Activated B cell treated with CpG ODN at 0.5 μM for 24 hours (primary cell): ENCODE measurements at regions of chr4 and their contacts with region 1.

Region 1: DNA sequence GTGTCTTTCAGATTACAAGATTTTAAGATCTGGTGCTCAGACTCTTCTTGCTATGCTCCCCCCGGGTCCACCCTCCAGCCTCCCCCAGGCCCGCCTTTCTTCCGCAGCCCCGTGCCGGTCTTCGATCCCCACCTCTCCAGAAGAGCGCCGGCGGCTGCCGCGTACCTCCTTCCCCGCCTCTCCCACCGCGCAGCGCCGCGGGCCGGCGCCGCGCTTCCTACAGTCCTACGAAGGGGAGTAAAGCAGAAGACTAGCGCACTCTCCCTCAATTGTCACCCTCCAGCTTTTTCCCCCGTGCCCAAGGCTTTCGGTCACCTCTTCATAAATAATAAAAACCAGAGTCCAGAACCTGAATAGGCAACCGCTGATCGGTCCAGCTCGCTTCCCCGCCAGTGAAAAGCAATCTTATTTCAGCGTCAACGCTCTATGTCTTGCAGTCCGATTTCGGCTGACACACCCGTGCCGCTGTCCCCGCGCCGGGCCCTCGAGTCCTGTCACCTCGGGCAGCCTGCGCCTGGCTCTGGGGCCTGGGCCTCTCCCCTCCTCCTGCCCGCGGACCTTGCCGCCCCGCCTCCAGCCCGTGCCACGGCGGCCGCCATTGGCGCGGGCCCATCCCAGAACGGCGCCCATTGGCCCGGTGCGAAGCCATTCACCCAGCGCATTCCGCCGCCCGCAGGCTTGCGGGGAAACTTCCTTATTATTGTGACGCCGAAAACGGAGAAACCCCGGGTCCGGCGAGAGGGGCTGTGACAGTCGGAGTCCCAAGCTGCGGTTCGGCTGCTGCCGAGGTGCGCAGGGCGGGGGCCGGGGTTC is at the start of gene HERC3:
- DNase-seq: peak; percentile 87
- ATAC-seq: peak; percentile 93
- H3K4me3 Mint-ChIP-seq: peak within 1 kb of the TSS; percentile 94
- H3K27ac Mint-ChIP-seq: peak within 1 kb of the TSS; percentile 84
- H3K4me1 Mint-ChIP-seq: peaks cover 32% of the 10 kb centered on the region
- H3K27me3 Mint-ChIP-seq: no peaks in the 10 kb centered on the region
- CTCF ChIP-seq: no peak
- total RNA-seq, gene HERC3: 23.8 and 27.5 TPM in 2 replicates

Region 2: DNA sequence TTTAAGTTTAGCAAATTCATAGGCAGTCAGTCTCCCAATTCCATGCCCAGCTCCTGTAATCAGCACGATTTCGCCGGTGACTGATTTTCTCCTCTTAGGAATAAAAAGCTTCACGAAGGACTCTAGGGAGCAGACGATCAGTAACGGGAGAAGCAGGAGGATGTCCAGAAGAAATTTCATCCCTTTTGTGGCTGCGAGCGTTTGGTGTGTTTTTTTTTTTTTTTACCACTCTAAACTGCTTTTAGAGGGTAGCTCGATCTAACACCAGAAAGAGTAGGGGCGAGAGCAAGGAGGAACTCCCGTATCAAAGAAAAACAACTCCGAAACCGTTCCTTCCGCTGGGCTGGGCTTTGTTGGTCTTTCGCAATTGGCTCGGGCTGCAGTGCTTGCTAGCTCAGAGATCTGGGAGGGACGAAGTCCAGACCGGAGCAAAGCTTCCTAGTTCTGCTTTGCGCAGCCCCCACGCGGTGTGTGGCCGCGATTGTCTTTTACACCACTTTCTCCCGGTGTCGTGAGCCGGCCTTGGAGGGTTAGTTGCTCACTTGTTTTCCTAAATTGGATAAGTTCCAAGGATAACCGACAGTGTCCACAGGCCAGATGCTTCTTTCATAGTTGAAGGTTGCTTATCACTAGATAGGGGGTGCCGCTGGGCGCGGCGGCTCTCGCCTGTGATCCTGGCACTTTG is 1201.0 kb before region 1 on chr4 and contains the start of gene HSD17B11:
- CTCF ChIA-PET with region 1: no interaction called
- POLR2A ChIA-PET with region 1: no interaction called
- intact Hi-C with region 1: loop called (anchors 10 kb)
- DNase-seq: peak; percentile 70
- ATAC-seq: peak; percentile 99
- H3K4me3 Mint-ChIP-seq: peak within 1 kb of the TSS; percentile 97
- H3K27ac Mint-ChIP-seq: peak within 1 kb of the TSS; percentile 96
- H3K4me1 Mint-ChIP-seq: peaks cover 48% of the 10 kb centered on the region
- H3K27me3 Mint-ChIP-seq: no peaks in the 10 kb centered on the region
- CTCF ChIP-seq: no peak
- total RNA-seq, gene HSD17B11: 26.2 and 28.4 TPM in 2 replicates

Region 3: GRCh38 chr4:88284439-88285234 is 307.4 kb before region 1 on chr4 and contains the start of gene PPM1K:
- CTCF ChIA-PET with region 1: no interaction called
- POLR2A ChIA-PET with region 1: interaction called, 13 read pairs
- intact Hi-C with region 1: loop called (anchors 1 kb)
- DNase-seq: peak; percentile 99
- ATAC-seq: peak; percentile 81
- H3K4me3 Mint-ChIP-seq: peak within 1 kb of the TSS; percentile 98
- H3K27ac Mint-ChIP-seq: peak within 1 kb of the TSS; percentile 99
- H3K4me1 Mint-ChIP-seq: peaks cover 54% of the 10 kb centered on the region
- H3K27me3 Mint-ChIP-seq: no peaks in the 10 kb centered on the region
- CTCF ChIP-seq: no peak
- total RNA-seq, gene PPM1K: 72.1 and 76.6 TPM in 2 replicates

Region 4: DNA sequence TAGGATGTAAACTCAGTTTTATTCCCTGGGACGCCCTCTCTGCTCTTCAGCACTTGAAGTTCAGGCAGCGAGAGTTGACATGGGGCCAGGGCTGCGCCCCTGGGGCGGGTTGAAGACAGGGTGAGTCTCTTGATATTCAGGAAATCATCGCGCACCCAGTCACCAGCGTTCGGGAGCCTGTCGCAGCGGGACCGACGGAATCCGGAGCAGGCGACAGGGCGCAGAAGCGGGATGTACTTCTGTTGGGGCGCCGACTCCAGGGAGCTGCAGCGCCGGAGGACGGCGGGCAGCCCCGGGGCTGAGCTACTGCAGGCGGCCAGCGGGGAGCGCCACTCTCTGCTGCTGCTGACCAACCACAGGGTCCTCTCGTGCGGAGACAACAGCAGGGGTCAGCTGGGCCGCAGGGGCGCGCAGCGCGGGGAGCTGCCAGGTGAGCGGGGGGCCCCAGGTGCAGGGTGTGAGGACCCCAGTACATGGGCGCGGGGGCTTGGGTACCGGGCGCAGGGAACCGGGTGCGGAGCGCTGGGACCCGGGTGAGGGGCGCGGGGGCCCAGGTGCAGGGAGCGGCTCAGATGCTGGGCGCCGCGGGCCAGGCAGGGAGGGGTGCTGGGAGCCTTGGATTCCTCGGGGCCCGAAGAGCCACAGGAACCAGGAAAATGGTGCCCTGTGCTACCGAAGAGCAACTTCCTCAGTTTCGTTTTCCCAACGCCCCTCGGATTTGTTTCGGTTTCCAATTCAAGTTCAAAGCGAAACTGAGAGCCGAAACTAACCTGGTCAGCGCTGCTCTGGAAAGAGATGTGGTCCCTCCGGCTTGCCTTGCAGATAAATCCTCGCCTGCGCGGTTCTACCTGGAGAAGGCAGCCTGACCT is 213.1 kb before region 1 on chr4 and contains the start of gene HERC6:
- CTCF ChIA-PET with region 1: no interaction called
- POLR2A ChIA-PET with region 1: interaction called, 5 read pairs
- intact Hi-C with region 1: loop called (anchors 2 kb)
- DNase-seq: peak; percentile 64
- ATAC-seq: peak; percentile 80
- H3K4me3 Mint-ChIP-seq: peak within 1 kb of the TSS; percentile 92
- H3K27ac Mint-ChIP-seq: peak within 1 kb of the TSS; percentile 91
- H3K4me1 Mint-ChIP-seq: peaks cover 31% of the 10 kb centered on the region
- H3K27me3 Mint-ChIP-seq: no peaks in the 10 kb centered on the region
- CTCF ChIP-seq: no peak
- total RNA-seq, gene HERC6: 11.4 and 12.2 TPM in 2 replicates

Region 5: GRCh38 chr4:88523325-88524129 is 68.5 kb before region 1 on chr4 and contains the start of gene PYURF:
- CTCF ChIA-PET with region 1: no interaction called
- POLR2A ChIA-PET with region 1: interaction called, 7 read pairs
- intact Hi-C with region 1: loop called (anchors 2 kb)
- DNase-seq: peak; percentile 72
- ATAC-seq: peak; percentile 84
- H3K4me3 Mint-ChIP-seq: peak within 1 kb of the TSS; percentile 95
- H3K27ac Mint-ChIP-seq: peak within 1 kb of the TSS; percentile 85
- H3K4me1 Mint-ChIP-seq: peaks cover 18% of the 10 kb centered on the region
- H3K27me3 Mint-ChIP-seq: no peaks in the 10 kb centered on the region
- CTCF ChIP-seq: no peak
- total RNA-seq, gene PYURF: 42.2 and 48.3 TPM in 2 replicates

Region 6: GRCh38 chr4:88697588-88698329 is 105.8 kb after region 1 on chr4 and contains the start of gene NAP1L5:
- CTCF ChIA-PET with region 1: no interaction called
- POLR2A ChIA-PET with region 1: interaction called, 6 read pairs
- intact Hi-C with region 1: loop called (anchors 1 kb)
- DNase-seq: peak; percentile 55
- ATAC-seq: peak; percentile 84
- H3K4me3 Mint-ChIP-seq: peak within 1 kb of the TSS; percentile 89
- H3K27ac Mint-ChIP-seq: peak within 1 kb of the TSS; percentile 78
- H3K4me1 Mint-ChIP-seq: peaks cover 9% of the 10 kb centered on the region
- H3K27me3 Mint-ChIP-seq: no peaks in the 10 kb centered on the region
- CTCF ChIP-seq: no peak
- total RNA-seq, gene NAP1L5: 1.8 and 2.6 TPM in 2 replicates

Region 7: DNA sequence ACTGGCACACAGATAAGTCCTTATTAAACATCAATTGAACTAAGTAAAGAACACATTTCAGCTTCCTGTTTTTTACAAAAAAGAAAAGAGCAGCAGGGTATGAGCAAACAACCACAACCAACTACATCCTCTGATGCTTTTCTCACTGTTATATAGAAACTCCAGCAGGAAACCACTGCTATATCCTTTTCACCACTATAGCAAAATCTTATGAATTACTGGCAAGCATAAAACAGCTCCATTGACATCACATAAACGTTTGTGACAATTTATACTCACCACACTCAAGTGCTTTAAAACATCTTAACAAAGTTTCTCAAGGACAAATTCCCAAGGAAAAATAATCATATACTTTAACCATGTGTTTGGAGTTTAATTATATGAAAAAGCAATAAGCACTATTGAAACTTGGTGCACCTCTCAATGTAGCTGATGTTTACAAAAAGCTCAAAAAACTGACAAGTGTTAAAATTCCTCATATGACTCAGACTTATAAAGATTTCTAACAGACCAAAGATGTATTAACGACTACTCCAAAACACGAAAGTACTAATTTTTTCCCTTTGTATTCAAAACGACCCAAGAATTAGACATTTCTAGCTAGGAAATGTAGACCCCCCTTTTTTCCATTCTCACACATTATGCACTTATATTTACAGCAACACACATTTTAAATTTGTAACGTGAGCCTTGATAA is 702.7 kb after region 1 on chr4:
- CTCF ChIA-PET with region 1: no interaction called
- POLR2A ChIA-PET with region 1: no interaction called
- intact Hi-C with region 1: loop called (anchors 10 kb)
- DNase-seq: no peak
- ATAC-seq: peak; percentile 33
- H3K4me3 Mint-ChIP-seq: no peak overlapping the region
- H3K27ac Mint-ChIP-seq: no peak overlapping the region
- H3K4me1 Mint-ChIP-seq: peaks cover 64% of the 10 kb centered on the region
- H3K27me3 Mint-ChIP-seq: peaks cover 7% of the 10 kb centered on the region
- CTCF ChIP-seq: no peak